ENCODE measurements at regions of chr18 and their contacts with region 1.

Region 1: GRCh38 chr18:8704361-8705279 is 736 bp upstream of the MTCL1 start:
- DNase-seq: peak; percentile 66 to 90 (median 80)
- H3K4me3 ChIP-seq: peak overlapping the region in 3 of 4 donors; percentile 15 to 83 (median 38)
- H3K27ac ChIP-seq: peak overlapping the region in 2 of 5 donors; percentile 69 to 77
- H3K4me1 ChIP-seq: peaks cover 9 to 18% of the 10 kb centered on the region in 2 donors
- H3K27me3 ChIP-seq: peaks cover 7% of the 10 kb centered on the region
- CTCF ChIP-seq: peak in 1 of 6 experiments; percentile 11
- POLR2A ChIP-seq: peak in 1 of 2 donors; percentile 18

Region 2: DNA sequence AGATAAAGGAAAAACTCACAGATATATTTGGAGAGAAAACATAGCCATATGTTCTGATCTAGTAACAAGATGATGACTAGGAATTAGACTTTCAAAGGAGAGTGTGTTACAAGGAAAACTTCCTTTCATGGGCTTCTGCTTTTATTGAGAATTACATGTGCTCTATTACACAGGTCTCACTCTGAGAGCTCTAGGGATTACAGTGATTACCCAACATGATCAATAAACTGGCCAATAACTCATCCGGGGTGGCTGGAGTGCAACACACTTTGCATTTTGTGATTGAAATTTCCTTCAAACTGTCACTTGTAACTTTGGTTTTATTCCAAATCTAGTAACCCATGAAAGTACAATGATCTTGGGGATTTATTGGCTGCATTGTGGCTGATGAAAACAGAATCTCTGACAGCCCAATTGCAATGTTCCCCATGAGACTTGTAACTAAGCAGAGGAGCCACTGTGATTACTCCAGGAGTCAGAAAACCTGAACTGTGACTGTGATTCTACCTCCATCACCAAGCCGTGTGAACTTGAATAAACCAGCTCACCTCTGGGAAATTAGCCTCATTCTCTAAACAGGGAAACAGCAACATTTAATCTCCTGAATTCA is 1514.0 kb before region 1 on chr18:
- intact Hi-C with region 1: no loop called
- DNase-seq: no peak
- H3K4me3 ChIP-seq: no peak overlapping the region
- H3K27ac ChIP-seq: no peak overlapping the region
- H3K4me1 ChIP-seq: no peaks in the 10 kb centered on the region
- H3K27me3 ChIP-seq: no peaks in the 10 kb centered on the region
- CTCF ChIP-seq: no peak
- POLR2A ChIP-seq: no peak

Region 3: GRCh38 chr18:8314124-8314523 is 390.5 kb before region 1 on chr18:
- intact Hi-C with region 1: no loop called
- DNase-seq: no peak
- H3K4me3 ChIP-seq: no peak overlapping the region
- H3K27ac ChIP-seq: no peak overlapping the region
- H3K4me1 ChIP-seq: no peaks in the 10 kb centered on the region
- H3K27me3 ChIP-seq: no peaks in the 10 kb centered on the region
- CTCF ChIP-seq: no peak
- POLR2A ChIP-seq: no peak

Region 4: DNA sequence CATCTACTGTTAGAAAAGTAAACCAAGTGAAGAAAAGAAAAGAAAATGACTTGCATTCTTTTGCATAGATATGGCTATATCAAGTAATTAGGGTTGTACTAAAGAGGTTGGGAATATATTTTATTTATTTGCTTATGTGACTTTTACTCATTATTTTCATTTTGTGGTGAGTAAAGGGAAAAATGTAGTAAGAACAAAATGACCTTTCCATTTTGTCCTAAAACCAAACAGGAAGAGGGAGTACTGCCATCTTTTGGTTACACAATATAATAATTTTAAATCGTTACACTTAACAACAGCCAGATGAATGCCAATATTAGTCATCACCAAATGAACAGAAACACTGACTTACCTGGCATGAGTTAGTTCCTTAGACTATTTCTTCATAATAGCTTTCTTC is 350.6 kb after region 1 on chr18:
- intact Hi-C with region 1: loop called in 1 of 2 experiments (anchors 10 kb)
- DNase-seq: no peak
- H3K4me3 ChIP-seq: no peak overlapping the region
- H3K27ac ChIP-seq: no peak overlapping the region
- H3K4me1 ChIP-seq: peaks cover 0 to 10% of the 10 kb centered on the region in 2 donors
- H3K27me3 ChIP-seq: no peaks in the 10 kb centered on the region
- CTCF ChIP-seq: peak in 4 of 6 experiments; percentile 6 to 37 (median 31)
- POLR2A ChIP-seq: no peak

Measured in adrenal gland (tissue), 19 donors.